Dorsolateral prefrontal cortex (tissue), 120 donors: ENCODE measurements at regions of chr16 and their contacts with region 1.

Region 1: GRCh38 chr16:35255186-35255803 is 1795.9 kb downstream of the TP53TG3F start:
- DNase-seq: no peak
- H3K4me3 ChIP-seq: no peak overlapping the region
- H3K27ac ChIP-seq: no peak overlapping the region
- H3K27me3 ChIP-seq: peaks cover 0 to 39% (median 7%) of the 10 kb centered on the region in 45 donors
- CTCF ChIP-seq: no peak

Region 2: GRCh38 chr16:35207059-35207999 is 48.0 kb before region 1 on chr16:
- intact Hi-C with region 1: loop called in 1 of 2 experiments (anchors 10 kb)
- DNase-seq: no peak
- H3K4me3 ChIP-seq: no peak overlapping the region
- H3K27ac ChIP-seq: no peak overlapping the region
- H3K27me3 ChIP-seq: peaks cover 0 to 56% (median 20%) of the 10 kb centered on the region in 45 donors
- CTCF ChIP-seq: no peak

Region 3: DNA sequence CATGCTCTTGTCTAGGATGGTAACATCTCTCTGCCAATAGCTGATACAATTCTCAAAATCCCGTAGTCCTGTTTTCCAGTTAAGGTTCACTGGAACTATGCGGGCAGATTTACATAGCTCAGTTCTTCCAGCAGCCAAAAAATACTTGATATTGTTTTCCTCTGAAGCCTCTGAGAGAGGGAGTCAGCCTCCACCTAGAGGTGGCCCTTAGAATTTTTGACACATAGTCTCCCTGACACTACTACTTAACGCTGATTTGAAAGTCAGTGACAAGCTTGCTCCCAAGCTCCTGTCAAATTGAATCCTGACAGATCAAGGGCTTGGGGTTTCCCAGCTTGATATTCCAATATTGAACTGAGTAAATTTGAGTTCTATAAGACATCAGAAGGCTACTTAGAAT is 15.7 kb before region 1 on chr16:
- intact Hi-C with region 1: no loop called
- DNase-seq: no peak
- H3K4me3 ChIP-seq: no peak overlapping the region
- H3K27ac ChIP-seq: no peak overlapping the region
- H3K27me3 ChIP-seq: peaks cover 0 to 74% (median 13%) of the 10 kb centered on the region in 45 donors
- CTCF ChIP-seq: peak in 1 of 56 donors; percentile 7

Region 4: DNA sequence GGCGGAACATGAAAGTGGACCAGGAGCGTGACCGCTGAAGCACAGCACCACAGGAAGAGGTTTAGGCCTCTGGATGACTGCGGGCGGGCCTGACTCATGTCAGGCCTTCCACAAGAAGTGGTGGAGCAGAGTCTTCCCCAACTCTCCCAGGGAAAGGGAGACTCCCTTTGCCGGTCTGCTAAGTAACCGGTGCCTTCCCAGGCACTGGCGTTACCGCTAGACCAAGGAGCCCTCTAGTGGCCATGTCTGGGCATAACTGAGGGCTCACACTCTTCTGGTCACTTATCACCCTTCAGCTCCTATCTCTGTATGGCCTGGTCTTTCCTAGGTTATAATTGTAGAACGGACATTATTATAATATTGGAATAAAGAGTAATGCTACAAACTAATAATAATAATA is 136.0 kb after region 1 on chr16:
- intact Hi-C with region 1: no loop called
- DNase-seq: peak in 8 of 10 donors; percentile 14 to 58 (median 34)
- H3K4me3 ChIP-seq: no peak overlapping the region
- H3K27ac ChIP-seq: no peak overlapping the region
- H3K27me3 ChIP-seq: peaks cover 0 to 32% (median 0%) of the 10 kb centered on the region in 45 donors
- CTCF ChIP-seq: peak in 55 of 56 donors; percentile 12 to 87 (median 57)